Activated T-helper 2 cell treated with anti-CD3 and anti-CD28 coated beads, Interferon-gamma antibody, Interleukin-2, Interleukin-4, amounts not matched to agents 10 μg/mL and 5 μg/mL and 100 μg/mL, durations not matched to agents 14 hours and 24 hours and 36 hours (primary cell): ENCODE measurements at regions of chr20 and their contacts with region 1.

Region 1: DNA sequence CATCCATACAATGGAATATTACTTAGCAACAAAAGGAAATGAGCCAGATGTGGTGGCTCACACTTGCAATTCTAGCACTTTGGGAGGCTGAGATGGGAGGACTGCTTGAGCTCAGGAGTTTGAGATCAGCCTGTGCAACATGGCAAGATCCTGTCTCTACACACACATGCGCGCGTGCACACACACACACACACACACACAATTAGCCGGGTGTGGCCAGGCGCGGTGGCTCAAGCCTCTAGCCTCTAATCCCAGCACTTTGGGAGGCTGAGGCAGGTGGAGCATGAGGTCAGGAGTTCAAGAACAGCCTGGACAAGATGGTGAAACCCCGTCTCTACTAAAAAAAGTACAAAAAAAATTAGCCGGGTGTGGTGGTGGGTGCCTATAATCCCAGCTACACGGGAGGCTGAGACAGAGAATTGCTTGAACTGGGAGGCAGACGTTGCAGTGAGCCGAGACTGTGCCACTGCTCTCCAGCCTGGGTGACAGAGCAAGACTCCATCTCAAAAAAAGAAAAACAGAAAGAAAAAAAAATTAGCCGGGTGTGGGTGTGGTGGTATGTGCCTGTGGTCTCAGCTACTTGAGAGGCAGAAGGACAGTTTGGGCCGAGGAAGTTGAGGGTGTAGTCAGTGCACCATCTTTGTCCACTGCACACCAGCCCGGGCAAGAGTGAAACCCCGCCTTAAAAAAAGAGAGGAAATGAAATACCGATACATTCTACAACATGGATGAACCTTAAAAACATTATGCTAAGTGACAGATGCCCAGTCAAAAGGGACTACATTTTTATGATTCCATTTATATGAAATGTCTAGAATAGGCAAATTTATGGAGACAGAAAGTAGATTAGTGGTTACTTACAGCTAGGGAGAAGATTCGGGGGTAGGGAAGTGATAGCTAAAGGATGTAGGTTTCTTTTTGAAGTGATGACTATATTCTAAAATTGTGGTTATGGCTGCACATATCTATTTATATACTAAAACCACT is 52.5 kb downstream of the RBL1 start:
- DNase-seq: peak; percentile 54
- H3K4me3 Mint-ChIP-seq: peak overlapping the region; percentile 82
- H3K27ac Mint-ChIP-seq: peak overlapping the region; percentile 98
- H3K4me1 Mint-ChIP-seq: peaks cover 35% of the 10 kb centered on the region
- H3K27me3 Mint-ChIP-seq: no peaks in the 10 kb centered on the region

Region 2: DNA sequence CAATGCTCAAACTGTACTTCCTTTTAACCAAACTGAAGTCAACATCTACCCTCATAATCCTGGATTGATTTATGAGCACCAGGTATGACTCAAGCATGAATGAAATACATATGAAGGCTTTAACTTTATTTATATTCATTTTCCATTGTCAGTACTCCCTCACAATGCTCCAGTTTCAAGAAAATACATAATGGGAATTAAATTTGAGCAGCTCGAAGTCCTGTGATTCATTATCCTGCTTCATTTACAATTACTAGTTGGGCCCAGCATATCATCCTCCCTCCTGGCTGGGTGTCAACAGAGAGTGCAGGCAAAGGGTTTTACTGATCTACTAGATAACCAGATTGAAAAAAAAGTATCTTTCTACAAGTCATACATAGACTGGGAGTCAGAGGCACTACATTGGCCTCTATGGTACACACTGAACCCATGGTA is 101.9 kb before region 1 on chr20:
- intact Hi-C with region 1: loop called (anchors 5 kb)
- DNase-seq: no peak
- H3K4me3 Mint-ChIP-seq: no peak overlapping the region
- H3K27ac Mint-ChIP-seq: peak overlapping the region; percentile 88
- H3K4me1 Mint-ChIP-seq: peaks cover 46% of the 10 kb centered on the region
- H3K27me3 Mint-ChIP-seq: no peaks in the 10 kb centered on the region

Region 3: GRCh38 chr20:37011147-37011546 is 32.1 kb before region 1 on chr20:
- intact Hi-C with region 1: loop called (anchors 1 kb)
- DNase-seq: no peak
- H3K4me3 Mint-ChIP-seq: no peak overlapping the region
- H3K27ac Mint-ChIP-seq: no peak overlapping the region
- H3K4me1 Mint-ChIP-seq: peaks cover 23% of the 10 kb centered on the region
- H3K27me3 Mint-ChIP-seq: no peaks in the 10 kb centered on the region

Region 4: GRCh38 chr20:37392421-37393178 is 349.3 kb after region 1 on chr20:
- intact Hi-C with region 1: no loop called
- DNase-seq: no peak
- H3K4me3 Mint-ChIP-seq: no peak overlapping the region
- H3K27ac Mint-ChIP-seq: no peak overlapping the region
- H3K4me1 Mint-ChIP-seq: no peaks in the 10 kb centered on the region
- H3K27me3 Mint-ChIP-seq: no peaks in the 10 kb centered on the region